Transverse colon (tissue), 4 donors: ENCODE measurements at regions of chr11 and their contacts with region 1.

Region 1: DNA sequence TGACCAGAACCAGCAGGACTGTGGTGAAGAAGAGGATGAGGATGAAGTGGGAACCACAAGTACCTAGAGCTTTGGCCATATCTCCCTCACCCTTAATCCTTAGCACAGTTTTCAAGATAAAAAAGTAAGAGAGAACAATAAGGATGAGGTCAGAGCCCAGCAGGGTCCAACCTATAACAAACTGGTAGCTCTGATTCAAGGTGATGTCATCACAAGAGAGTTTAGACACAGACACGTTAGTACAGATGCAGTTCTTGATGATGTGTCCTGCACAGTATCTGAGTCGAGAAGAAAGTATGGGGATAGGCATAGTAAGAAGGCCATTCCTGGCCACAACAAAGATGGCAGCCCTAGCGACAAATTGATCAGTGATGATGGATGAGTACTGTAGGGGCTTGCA is 586 bp downstream of the OR56A5 start:
- DNase-seq: no peak
- H3K4me3 ChIP-seq: no peak overlapping the region
- H3K27ac ChIP-seq: no peak overlapping the region
- H3K4me1 ChIP-seq: no peaks in the 10 kb centered on the region
- H3K27me3 ChIP-seq: no peaks in the 10 kb centered on the region
- CTCF ChIP-seq: no peak
- EP300 ChIP-seq: no peak
- POLR2A ChIP-seq: no peak

Region 2: GRCh38 chr11:5504403-5504921 is 463.2 kb before region 1 on chr11:
- in situ Hi-C with region 1: no loop called
- intact Hi-C with region 1: no loop called
- DNase-seq: no peak
- H3K4me3 ChIP-seq: no peak overlapping the region
- H3K27ac ChIP-seq: no peak overlapping the region
- H3K4me1 ChIP-seq: no peaks in the 10 kb centered on the region
- H3K27me3 ChIP-seq: no peaks in the 10 kb centered on the region
- CTCF ChIP-seq: no peak
- EP300 ChIP-seq: no peak
- POLR2A ChIP-seq: no peak

Region 3: GRCh38 chr11:5955586-5955985 is 12.1 kb before region 1 on chr11:
- in situ Hi-C with region 1: no loop called
- intact Hi-C with region 1: loop called (anchors 1 kb)
- DNase-seq: no peak
- H3K4me3 ChIP-seq: no peak overlapping the region
- H3K27ac ChIP-seq: no peak overlapping the region
- H3K4me1 ChIP-seq: no peaks in the 10 kb centered on the region
- H3K27me3 ChIP-seq: no peaks in the 10 kb centered on the region
- CTCF ChIP-seq: no peak
- EP300 ChIP-seq: no peak
- POLR2A ChIP-seq: no peak

Region 4: DNA sequence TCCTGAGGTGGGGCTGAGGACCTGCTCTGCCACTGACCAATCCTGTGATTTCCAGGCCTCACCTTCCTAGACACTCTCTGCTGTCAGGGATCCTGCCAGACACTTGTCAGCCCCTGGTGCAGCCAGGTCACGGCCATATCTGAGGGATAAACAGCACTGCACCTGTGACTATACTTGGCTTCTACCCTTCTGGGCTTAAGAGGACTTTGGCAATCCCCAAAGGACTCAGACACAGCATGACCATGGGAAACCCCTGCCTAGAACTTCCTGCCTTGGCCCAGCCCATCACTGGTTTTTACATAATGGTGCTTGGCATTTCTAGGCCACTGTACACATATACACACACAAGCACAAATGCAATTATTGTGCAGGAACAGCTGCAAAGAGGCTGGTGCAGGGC is 1506.0 kb after region 1 on chr11:
- in situ Hi-C with region 1: no loop called
- intact Hi-C with region 1: loop called (anchors 10 kb)
- DNase-seq: no peak
- H3K4me3 ChIP-seq: no peak overlapping the region
- H3K27ac ChIP-seq: no peak overlapping the region
- H3K4me1 ChIP-seq: no peaks in the 10 kb centered on the region
- H3K27me3 ChIP-seq: no peaks in the 10 kb centered on the region
- CTCF ChIP-seq: no peak
- EP300 ChIP-seq: no peak
- POLR2A ChIP-seq: no peak